Tibial artery (tissue), 4 donors: ENCODE measurements at regions of chr18 and their contacts with region 1.

Region 1: GRCh38 chr18:52615943-52616342 is 275.9 kb downstream of the DCC start:
- DNase-seq: no peak
- H3K4me3 ChIP-seq: no peak overlapping the region
- H3K27ac ChIP-seq: no peak overlapping the region
- H3K4me1 ChIP-seq: no peaks in the 10 kb centered on the region
- H3K27me3 ChIP-seq: no peaks in the 10 kb centered on the region
- CTCF ChIP-seq: no peak

Region 2: GRCh38 chr18:52553441-52553840 is 62.5 kb before region 1 on chr18:
- intact Hi-C with region 1: loop called (anchors 10 kb)
- DNase-seq: no peak
- H3K4me3 ChIP-seq: no peak overlapping the region
- H3K27ac ChIP-seq: no peak overlapping the region
- H3K4me1 ChIP-seq: no peaks in the 10 kb centered on the region
- H3K27me3 ChIP-seq: no peaks in the 10 kb centered on the region
- CTCF ChIP-seq: no peak